A549 (cell line): ENCODE measurements at regions of chr17 and their contacts with region 1.

Region 1: GRCh38 chr17:2707721-2708584 is 3.6 kb downstream of the CLUH start:
- DNase-seq: peak; percentile 61 to 76
- ATAC-seq: peak in 1 of 2 experiments; percentile 42; a peak in 3 of 6 replicates
- H3K4me3 ChIP-seq: no peak overlapping the region
- H3K27ac ChIP-seq: peak overlapping the region; percentile 8 to 95; a peak in 3 of 6 replicates
- H3K4me1 ChIP-seq: peaks cover 56% of the 10 kb centered on the region
- CTCF ChIP-seq: peak; percentile 41; the same call in 2 of the 3 replicates
- EP300 ChIP-seq: no peak
- POLR2A ChIP-seq: no peak
- RAD21 ChIP-seq: peak; percentile 52 to 59; a peak in 4 of 5 replicates

Region 2: GRCh38 chr17:2564878-2565277 is 143.1 kb before region 1 on chr17:
- CTCF ChIA-PET with region 1: no interaction called
- POLR2A ChIA-PET with region 1: no interaction called
- DNase-seq: peak in 1 of 2 experiments; percentile 77
- ATAC-seq: peak; percentile 50 to 65; a peak in 3 of 6 replicates
- H3K4me3 ChIP-seq: no peak overlapping the region
- H3K27ac ChIP-seq: peak overlapping the region; percentile 34 to 48; a peak in 5 of 6 replicates
- H3K4me1 ChIP-seq: peaks cover 13% of the 10 kb centered on the region
- CTCF ChIP-seq: no peak
- EP300 ChIP-seq: no peak
- POLR2A ChIP-seq: no peak
- RAD21 ChIP-seq: no peak

Region 3: DNA sequence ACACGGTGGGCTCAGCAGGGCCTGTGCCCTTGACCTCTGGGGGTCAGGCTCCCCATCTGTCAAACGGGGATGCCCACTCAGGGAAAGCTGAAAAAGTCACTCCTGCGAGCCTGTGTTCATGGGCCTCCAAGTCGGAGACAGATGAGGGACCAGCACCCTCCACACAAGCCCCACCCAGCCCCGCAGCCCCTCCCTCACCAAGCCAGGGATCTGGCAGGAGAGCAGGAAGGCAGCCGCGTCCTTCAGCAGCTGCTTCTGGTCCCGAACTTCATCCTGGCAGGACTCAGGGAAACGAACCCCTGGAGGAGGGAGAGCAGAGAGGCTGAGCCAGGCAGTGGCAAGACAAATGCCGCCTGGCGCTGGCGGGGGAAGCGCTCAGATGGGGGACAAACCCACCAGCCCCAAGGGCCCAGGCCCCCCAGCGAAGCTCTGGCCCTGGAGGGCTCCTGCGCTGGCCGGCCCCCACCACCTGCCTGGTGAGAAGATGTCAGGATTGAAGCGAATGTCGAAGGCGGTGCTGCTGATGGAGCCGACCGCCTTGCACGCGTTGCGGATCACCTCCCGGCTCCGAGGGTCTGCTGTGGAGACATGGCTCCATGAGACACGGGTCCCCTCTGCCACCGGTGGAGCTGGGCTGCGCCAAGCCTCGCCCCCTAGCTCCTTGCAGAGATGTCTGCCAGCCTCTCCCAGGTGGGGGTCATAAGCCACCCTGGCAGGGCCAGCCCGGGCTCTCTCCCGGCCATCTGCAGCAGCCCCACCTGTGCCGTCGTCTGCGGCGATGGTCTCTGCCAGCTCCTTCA is 11.8 kb before region 1 on chr17:
- CTCF ChIA-PET with region 1: interaction called, 24 read pairs
- POLR2A ChIA-PET with region 1: interaction called, 4 read pairs
- DNase-seq: no peak
- ATAC-seq: no peak
- H3K4me3 ChIP-seq: no peak overlapping the region
- H3K27ac ChIP-seq: no peak overlapping the region
- H3K4me1 ChIP-seq: no peaks in the 10 kb centered on the region
- CTCF ChIP-seq: no peak
- EP300 ChIP-seq: no peak
- POLR2A ChIP-seq: no peak
- RAD21 ChIP-seq: no peak

Region 4: DNA sequence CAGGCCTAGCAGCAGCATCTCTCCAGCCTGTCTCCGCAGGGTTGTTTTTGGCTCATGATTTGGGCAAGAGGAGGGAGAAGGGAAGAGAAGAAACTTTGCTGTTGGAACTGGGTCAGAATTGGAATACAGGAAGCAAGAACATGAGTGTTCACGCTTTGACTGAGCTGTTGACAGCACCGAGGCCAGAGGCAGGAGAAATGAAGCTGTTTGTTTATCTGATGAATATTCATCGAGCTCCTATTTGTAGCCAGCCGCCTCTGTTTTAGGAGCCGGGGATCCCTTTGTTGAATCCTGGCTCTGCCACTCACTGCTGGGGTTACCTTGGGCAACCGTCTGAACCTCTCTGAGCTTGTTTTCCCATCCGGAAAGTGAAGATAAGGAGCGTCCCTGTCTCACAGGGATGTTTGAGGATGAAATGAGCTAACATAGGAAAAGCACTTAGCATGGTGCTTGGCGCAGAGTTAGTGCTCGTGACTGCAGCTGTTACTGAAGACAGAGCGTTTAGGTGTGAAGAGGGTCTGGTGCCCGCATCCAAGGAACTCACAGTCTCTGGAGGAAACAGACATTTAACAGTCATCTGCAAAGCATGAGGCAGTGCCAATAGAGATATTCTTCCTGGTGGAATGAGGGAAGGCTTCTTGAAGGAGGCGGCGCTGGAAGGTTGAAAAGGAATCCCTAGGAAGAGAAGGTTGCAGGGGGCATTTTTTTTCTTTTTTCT is 117.5 kb after region 1 on chr17:
- CTCF ChIA-PET with region 1: no interaction called
- POLR2A ChIA-PET with region 1: no interaction called
- DNase-seq: no peak
- ATAC-seq: no peak
- H3K4me3 ChIP-seq: no peak overlapping the region
- H3K27ac ChIP-seq: no peak overlapping the region
- H3K4me1 ChIP-seq: peaks cover 7% of the 10 kb centered on the region
- CTCF ChIP-seq: no peak
- EP300 ChIP-seq: no peak
- POLR2A ChIP-seq: no peak
- RAD21 ChIP-seq: no peak